Head of caudate nucleus (tissue), 42 donors: ENCODE measurements at regions of chr12 and their contacts with region 1.

Region 1: DNA sequence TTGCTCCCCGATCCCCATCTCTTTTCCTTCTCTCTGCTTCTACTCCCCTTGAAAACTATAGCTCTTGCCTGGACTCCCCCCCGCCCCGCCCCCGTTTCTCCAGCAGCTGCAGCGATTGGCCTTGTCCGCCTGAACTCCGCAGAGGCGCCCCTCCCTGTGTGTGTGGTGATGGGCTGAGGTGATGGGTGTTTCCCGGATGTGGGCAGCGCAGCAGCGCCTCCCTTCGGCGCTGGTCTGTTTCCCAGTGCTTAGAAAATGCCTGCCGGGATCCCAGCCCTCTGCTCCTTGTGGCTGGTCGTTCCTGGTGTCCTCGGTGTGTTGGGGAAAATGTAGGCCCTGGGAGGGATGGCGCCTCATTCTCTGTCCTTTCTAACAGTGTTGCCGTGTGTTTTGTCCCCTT is 43.3 kb downstream of the GALNT8 start:
- DNase-seq: peak in 9 of 42 donors; percentile 4 to 56 (median 28)

Region 2: DNA sequence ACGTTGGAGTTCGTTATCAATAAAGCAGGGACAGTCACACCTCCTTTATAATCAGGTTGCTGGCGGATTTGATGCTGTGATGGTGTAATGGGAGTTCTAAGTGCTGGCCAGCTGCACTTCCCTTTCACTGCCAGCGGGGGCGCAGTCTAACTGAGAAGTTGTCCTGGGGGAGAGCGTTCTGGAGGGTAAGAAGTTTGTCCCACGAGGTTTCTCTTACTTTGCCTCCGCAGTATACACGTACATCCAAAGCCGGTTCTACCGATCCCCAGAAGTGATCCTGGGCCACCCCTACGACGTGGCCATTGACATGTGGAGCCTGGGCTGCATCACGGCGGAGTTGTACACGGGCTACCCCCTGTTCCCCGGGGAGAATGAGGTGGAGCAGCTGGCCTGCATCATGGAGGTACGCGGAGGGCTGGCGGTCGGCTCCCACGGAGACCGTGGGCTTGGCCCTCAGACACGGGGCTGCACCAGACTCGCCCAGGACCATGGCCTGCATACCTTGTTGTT is 158.8 kb before region 1 on chr12:
- intact Hi-C with region 1: loop called (anchors 10 kb)
- DNase-seq: peak; percentile 72 to 95 (median 85)

Region 3: GRCh38 chr12:4796694-4797482 is 33.3 kb after region 1 on chr12:
- intact Hi-C with region 1: no loop called
- DNase-seq: no peak

Region 4: GRCh38 chr12:5230156-5230555 is 466.6 kb after region 1 on chr12:
- intact Hi-C with region 1: no loop called
- DNase-seq: no peak